ENCODE measurements at regions of chr2 and their contacts with region 1.

Region 1: GRCh38 chr2:219402665-219403515 is 15.2 kb upstream of the DNPEP start:
- DNase-seq: peak in 1 of 2 donors; percentile 81
- ATAC-seq: peak; percentile 75 to 99 (median 96)
- H3K4me3 ChIP-seq: no peak overlapping the region
- H3K4me3 Mint-ChIP-seq: no peak overlapping the region
- H3K27ac ChIP-seq: no peak overlapping the region
- H3K27ac Mint-ChIP-seq: no peak overlapping the region
- H3K4me1 ChIP-seq: no peaks in the 10 kb centered on the region
- H3K4me1 Mint-ChIP-seq: peaks cover 0 to 11% of the 10 kb centered on the region in 2 donors
- H3K27me3 ChIP-seq: no peaks in the 10 kb centered on the region
- H3K27me3 Mint-ChIP-seq: peaks cover 19 to 21% of the 10 kb centered on the region in 2 donors
- CTCF ChIP-seq: peak; percentile 82

Region 2: GRCh38 chr2:219459460-219460311 is 56.8 kb after region 1 on chr2:
- intact Hi-C with region 1: loop called (anchors 2 kb)
- DNase-seq: peak; percentile 33 to 62
- ATAC-seq: peak; percentile 45 to 75 (median 52)
- H3K4me3 ChIP-seq: no peak overlapping the region
- H3K4me3 Mint-ChIP-seq: no peak overlapping the region
- H3K27ac ChIP-seq: no peak overlapping the region
- H3K27ac Mint-ChIP-seq: no peak overlapping the region
- H3K4me1 ChIP-seq: no peaks in the 10 kb centered on the region
- H3K4me1 Mint-ChIP-seq: no peaks in the 10 kb centered on the region
- H3K27me3 ChIP-seq: no peaks in the 10 kb centered on the region
- H3K27me3 Mint-ChIP-seq: peaks cover 0 to 3% of the 10 kb centered on the region in 2 donors
- CTCF ChIP-seq: peak; percentile 79

Region 3: DNA sequence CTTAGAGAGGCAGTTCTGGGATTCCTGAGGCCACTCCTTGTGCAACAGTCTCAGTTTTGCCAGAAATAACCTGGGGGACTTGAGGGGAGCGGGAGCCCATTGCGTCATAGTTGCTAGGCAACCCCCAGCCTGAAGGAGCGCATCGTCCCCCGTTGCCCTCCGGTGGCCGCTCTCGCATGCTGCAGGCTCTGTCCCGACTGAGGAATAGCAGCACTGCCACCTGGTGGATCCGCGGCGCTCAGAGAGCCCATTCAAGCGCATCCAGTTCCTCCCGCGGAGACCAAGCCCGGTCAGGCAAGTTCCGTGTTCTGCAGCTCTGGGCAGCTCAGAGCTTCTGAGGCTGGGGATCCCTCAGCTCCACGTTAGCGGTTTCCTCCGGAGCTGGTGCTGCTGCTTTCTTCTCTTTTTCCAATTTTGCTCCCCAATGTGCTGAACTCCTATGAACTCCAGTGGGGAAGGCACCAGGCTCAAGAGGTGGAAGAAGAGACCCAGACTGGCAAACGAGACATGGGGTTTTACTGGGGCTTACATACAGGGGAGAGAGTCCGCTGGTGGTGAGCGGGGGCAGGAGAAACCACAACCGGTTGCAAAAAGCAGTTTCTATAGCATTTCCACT is 239.7 kb after region 1 on chr2:
- intact Hi-C with region 1: loop called (anchors 5 kb)
- DNase-seq: peak; percentile 81 to 95
- ATAC-seq: peak; percentile 95 to 100 (median 100)
- H3K4me3 ChIP-seq: no peak overlapping the region
- H3K4me3 Mint-ChIP-seq: no peak overlapping the region
- H3K27ac ChIP-seq: no peak overlapping the region
- H3K27ac Mint-ChIP-seq: peak overlapping the region in 1 of 2 donors; percentile 67
- H3K4me1 ChIP-seq: peaks cover 28% of the 10 kb centered on the region
- H3K4me1 Mint-ChIP-seq: peaks cover 0 to 23% of the 10 kb centered on the region in 2 donors
- H3K27me3 ChIP-seq: peaks cover 2% of the 10 kb centered on the region
- H3K27me3 Mint-ChIP-seq: peaks cover 0 to 7% of the 10 kb centered on the region in 2 donors
- CTCF ChIP-seq: peak; percentile 97